Right ventricle myocardium inferior (tissue), 1 donor: ENCODE measurements at regions of chr20 and their contacts with region 1.

Region 1: GRCh38 chr20:3316136-3316535 is 77.1 kb upstream of the SLC4A11 start:
- DNase-seq: no peak
- ATAC-seq: no peak

Region 2: GRCh38 chr20:3051385-3052019 is 264.6 kb before region 1 on chr20:
- intact Hi-C with region 1: loop called (anchors 5 kb)
- DNase-seq: no peak
- ATAC-seq: no peak

Region 3: GRCh38 chr20:3218307-3218988 is 97.7 kb before region 1 on chr20:
- intact Hi-C with region 1: loop called (anchors 5 kb)
- DNase-seq: peak; percentile 91
- ATAC-seq: peak; percentile 64

Region 4: DNA sequence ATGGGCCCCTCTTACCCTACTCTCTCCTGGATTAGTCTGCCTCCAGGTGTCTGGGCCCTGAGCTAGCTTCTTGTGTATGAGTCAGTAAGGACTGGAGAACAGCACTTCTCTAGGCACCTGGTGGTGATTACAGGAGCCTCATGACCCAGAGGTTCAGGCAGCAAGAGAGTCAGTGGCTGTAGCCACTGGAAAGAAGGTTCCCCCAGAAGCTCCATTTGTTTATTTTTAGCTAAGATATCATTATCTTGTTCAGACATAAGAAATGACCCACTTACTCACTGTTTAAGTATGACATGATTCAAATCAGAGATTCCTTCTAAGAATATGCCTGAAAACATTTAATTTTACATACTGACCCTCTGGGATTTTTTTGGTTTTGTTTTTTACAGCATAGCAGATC is 53.6 kb before region 1 on chr20:
- intact Hi-C with region 1: no loop called
- DNase-seq: no peak
- ATAC-seq: no peak